IMR-90 (cell line): ENCODE measurements at regions of chr7 and their contacts with region 1.

Region 1: DNA sequence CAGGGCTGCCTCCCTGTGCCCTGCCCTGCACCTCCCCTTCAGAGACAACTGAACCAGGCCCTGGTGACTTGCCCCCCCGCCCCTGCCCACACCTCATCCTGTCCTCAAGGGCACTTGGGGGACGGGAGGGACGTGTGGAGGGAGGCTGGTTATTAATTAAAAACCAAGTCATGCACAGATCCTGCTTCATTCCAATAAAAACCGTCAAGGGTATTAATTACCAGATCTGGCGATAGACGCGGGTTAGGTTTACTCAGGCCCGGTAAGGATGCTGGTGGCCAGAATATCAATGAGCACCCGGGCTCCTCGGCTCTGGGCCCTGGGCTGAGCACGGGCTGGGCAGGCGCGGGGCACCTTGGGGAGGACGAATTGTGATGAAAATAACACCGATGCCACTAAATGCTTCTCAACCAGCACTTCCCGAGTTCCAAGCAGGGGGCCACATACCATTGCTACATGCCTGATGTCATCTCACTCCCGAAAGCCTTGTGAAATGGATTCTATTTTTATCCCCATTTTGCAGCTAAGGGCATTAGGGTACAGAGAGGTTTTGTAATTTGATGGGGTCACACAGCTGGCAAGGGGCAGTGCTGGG is 24.5 kb upstream of the GTF2IRD1 start:
- DNase-seq: peak; percentile 75
- ATAC-seq: peak; percentile 79
- H3K4me3 ChIP-seq: no peak overlapping the region
- H3K27ac ChIP-seq: no peak overlapping the region
- H3K4me1 ChIP-seq: peaks cover 8% of the 10 kb centered on the region
- H3K27me3 ChIP-seq: no peaks in the 10 kb centered on the region; the same call in 1 of the 2 replicates
- CTCF ChIP-seq: no peak
- POLR2A ChIP-seq: no peak
- RAD21 ChIP-seq: no peak

Region 2: GRCh38 chr7:74561898-74562613 is 132.8 kb after region 1 on chr7:
- CTCF ChIA-PET with region 1: interaction called, 4 read pairs
- POLR2A ChIA-PET with region 1: no interaction called
- dilution Hi-C with region 1: no loop called
- in situ Hi-C with region 1: loop called (anchors 5 kb)
- intact Hi-C with region 1: no loop called
- DNase-seq: no peak
- ATAC-seq: no peak
- H3K4me3 ChIP-seq: no peak overlapping the region
- H3K27ac ChIP-seq: no peak overlapping the region
- H3K4me1 ChIP-seq: no peaks in the 10 kb centered on the region
- H3K27me3 ChIP-seq: no peaks in the 10 kb centered on the region
- CTCF ChIP-seq: no peak
- POLR2A ChIP-seq: no peak
- RAD21 ChIP-seq: no peak

Region 3: DNA sequence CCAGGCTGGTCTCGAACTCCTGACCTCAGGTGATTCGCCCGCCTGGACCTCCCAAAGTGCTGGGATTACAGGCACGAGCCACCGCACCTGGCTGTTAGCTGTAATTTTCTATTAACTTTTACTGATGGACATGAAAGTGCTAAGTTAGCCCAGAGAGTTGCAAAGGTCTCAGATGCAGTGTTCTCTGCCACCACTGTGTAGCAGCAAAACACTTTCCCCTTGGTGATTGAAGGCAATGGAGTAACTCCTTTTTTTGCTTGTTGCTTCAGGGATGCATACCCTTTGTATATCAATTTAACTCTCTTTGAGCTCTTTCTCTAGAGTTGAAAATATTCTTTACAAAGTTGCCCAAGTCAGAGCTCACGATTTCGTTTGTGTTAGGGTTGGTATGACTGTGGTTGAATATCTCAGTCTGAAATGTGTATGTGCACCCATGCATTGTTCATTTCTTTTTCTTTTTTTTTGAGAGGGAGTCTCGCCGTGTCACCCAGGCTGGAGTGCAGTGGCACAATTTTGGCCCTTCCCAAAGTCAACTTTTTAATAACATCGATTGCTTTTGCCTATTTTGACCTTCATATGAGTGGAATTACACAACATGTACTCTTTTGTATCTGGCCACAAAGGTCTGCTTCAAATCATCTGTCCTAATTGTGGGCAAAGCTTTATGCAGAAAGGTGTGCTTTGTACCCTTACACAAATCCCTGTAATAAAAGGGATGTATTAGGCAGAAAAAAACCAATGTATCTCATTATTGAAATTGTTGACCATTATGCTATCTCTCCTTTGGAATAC is 280.8 kb after region 1 on chr7:
- CTCF ChIA-PET with region 1: no interaction called
- POLR2A ChIA-PET with region 1: no interaction called
- dilution Hi-C with region 1: no loop called
- in situ Hi-C with region 1: loop called (anchors 10 kb)
- intact Hi-C with region 1: no loop called
- DNase-seq: peak; percentile 7
- ATAC-seq: no peak
- H3K4me3 ChIP-seq: no peak overlapping the region
- H3K27ac ChIP-seq: peak overlapping the region; percentile 25; the same call in 1 of the 2 replicates
- H3K4me1 ChIP-seq: peaks cover 7% of the 10 kb centered on the region
- H3K27me3 ChIP-seq: no peaks in the 10 kb centered on the region
- CTCF ChIP-seq: 0 out of 2 replicates have a peak, but pooled peaks have one; percentile 15
- POLR2A ChIP-seq: no peak
- RAD21 ChIP-seq: peak; percentile 24; the same call in 1 of the 2 replicates